Endothelial cell of umbilical vein (primary cell): ENCODE measurements at regions of chr5 and their contacts with region 1.

Region 1: DNA sequence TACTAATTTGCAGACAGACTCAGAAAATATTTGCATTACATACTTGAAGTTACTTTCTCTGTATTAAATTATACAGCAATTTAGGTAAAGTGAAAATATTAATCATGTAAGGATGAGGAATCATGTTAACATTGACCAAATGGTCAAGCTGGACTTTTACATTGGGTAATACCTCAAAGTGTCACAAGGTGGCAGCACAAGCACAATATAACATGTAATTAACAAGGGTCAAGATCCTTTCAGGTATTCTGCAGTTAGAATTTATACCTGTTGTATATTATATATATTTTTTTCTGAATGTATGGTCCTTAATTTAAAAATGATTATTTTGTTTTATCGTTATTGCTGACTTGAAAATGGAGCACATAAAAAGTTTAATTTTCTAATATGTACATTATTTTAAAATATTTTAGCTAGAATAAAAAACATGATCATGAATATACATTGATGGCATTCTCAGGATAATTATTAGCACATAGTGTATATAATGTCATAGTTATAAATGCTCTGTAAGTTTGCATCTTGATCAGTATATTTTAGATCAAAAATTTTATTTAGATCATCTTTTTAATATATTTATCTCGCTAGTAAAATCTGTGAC is 8.6 kb downstream of the HAPLN1 start:
- DNase-seq: peak; percentile 64
- H3K4me3 ChIP-seq: no peak overlapping the region
- H3K27ac ChIP-seq: no peak overlapping the region
- H3K4me1 ChIP-seq: no peaks in the 10 kb centered on the region
- H3K27me3 ChIP-seq: peaks cover 2 to 6% of the 10 kb centered on the region in 2 experiments
- CTCF ChIP-seq: peak; percentile 51 to 57
- POLR2A ChIP-seq: no peak

Region 2: GRCh38 chr5:83357621-83358231 is 354.4 kb before region 1 on chr5:
- CTCF ChIA-PET with region 1: no interaction called
- POLR2A ChIA-PET with region 1: no interaction called
- dilution Hi-C with region 1: no loop called
- intact Hi-C with region 1: no loop called
- DNase-seq: no peak
- H3K4me3 ChIP-seq: no peak overlapping the region
- H3K27ac ChIP-seq: no peak overlapping the region
- H3K4me1 ChIP-seq: no peaks in the 10 kb centered on the region
- H3K27me3 ChIP-seq: no peaks in the 10 kb centered on the region
- CTCF ChIP-seq: no peak
- POLR2A ChIP-seq: no peak

Region 3: DNA sequence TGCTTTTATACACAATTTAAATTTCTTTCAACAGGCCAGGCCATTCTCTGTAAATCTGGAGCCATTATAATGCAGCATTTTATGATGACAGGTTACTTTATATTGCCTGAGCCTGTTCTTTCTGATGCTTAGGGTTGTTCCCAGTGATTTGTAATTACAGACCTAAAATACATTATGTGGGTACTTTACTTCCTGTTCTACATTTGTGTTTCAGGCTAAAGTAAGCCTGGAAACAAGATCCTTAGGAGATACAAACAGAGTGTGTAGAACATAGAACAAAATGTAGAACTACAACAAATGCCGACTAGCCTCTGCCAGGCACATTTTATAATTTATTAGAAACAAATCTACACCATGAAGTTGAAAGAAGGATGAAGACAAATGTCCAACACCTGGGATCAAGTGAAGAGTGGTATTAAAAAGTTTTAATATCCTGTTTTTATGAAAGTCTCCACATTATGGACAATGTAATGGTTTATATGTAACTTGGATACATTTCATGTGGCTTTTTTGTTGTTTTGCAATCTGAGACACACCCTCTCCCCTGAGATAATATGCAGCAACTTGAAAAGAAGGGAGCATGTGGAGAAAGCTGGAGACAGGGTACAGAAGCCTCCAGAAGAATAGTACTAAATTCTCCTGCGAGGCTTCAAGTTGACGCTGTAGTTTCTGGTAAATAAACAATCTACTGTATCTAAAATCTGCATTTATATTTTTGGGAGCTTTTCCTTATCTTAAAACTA is 193.6 kb before region 1 on chr5:
- CTCF ChIA-PET with region 1: no interaction called
- POLR2A ChIA-PET with region 1: no interaction called
- dilution Hi-C with region 1: no loop called
- intact Hi-C with region 1: no loop called
- DNase-seq: no peak
- H3K4me3 ChIP-seq: no peak overlapping the region
- H3K27ac ChIP-seq: no peak overlapping the region
- H3K4me1 ChIP-seq: no peaks in the 10 kb centered on the region
- H3K27me3 ChIP-seq: peaks cover under 1 to 3% of the 10 kb centered on the region in 2 experiments
- CTCF ChIP-seq: no peak
- POLR2A ChIP-seq: no peak

Region 4: GRCh38 chr5:83608122-83608521 is 104.0 kb before region 1 on chr5:
- CTCF ChIA-PET with region 1: interaction called, 32 read pairs
- POLR2A ChIA-PET with region 1: no interaction called
- dilution Hi-C with region 1: no loop called
- intact Hi-C with region 1: loop called (anchors 5 kb)
- DNase-seq: peak; percentile 55
- H3K4me3 ChIP-seq: no peak overlapping the region
- H3K27ac ChIP-seq: no peak overlapping the region
- H3K4me1 ChIP-seq: no peaks in the 10 kb centered on the region
- H3K27me3 ChIP-seq: no peaks in the 10 kb centered on the region
- CTCF ChIP-seq: peak; percentile 26 to 70
- POLR2A ChIP-seq: no peak